CD14-positive monocyte (primary cell): ENCODE measurements at regions of chr3 and their contacts with region 1.

Region 1: GRCh38 chr3:130539005-130539404 is 22.0 kb downstream of the COL6A6 start:
- DNase-seq: no peak
- H3K4me3 ChIP-seq: no peak overlapping the region
- H3K4me3 Mint-ChIP-seq: no peak overlapping the region
- H3K27ac ChIP-seq: no peak overlapping the region
- H3K27ac Mint-ChIP-seq: peak overlapping the region in 1 of 7 donors; percentile 48
- H3K4me1 ChIP-seq: no peaks in the 10 kb centered on the region
- H3K4me1 Mint-ChIP-seq: no peaks in the 10 kb centered on the region
- H3K27me3 ChIP-seq: no peaks in the 10 kb centered on the region
- H3K27me3 Mint-ChIP-seq: peaks cover 0 to 8% (median 3%) of the 10 kb centered on the region in 3 donors
- CTCF ChIP-seq: peak; percentile 67

Region 2: GRCh38 chr3:130276203-130276803 is 262.7 kb before region 1 on chr3:
- intact Hi-C with region 1: loop called (anchors 5 to 10 kb)
- DNase-seq: peak in 2 of 3 donors; percentile 8 to 18
- H3K4me3 ChIP-seq: no peak overlapping the region
- H3K4me3 Mint-ChIP-seq: no peak overlapping the region
- H3K27ac ChIP-seq: no peak overlapping the region
- H3K27ac Mint-ChIP-seq: no peak overlapping the region
- H3K4me1 ChIP-seq: no peaks in the 10 kb centered on the region
- H3K4me1 Mint-ChIP-seq: no peaks in the 10 kb centered on the region
- H3K27me3 ChIP-seq: no peaks in the 10 kb centered on the region
- H3K27me3 Mint-ChIP-seq: peaks cover 0 to 9% (median 7%) of the 10 kb centered on the region in 3 donors
- CTCF ChIP-seq: peak; percentile 76

Region 3: DNA sequence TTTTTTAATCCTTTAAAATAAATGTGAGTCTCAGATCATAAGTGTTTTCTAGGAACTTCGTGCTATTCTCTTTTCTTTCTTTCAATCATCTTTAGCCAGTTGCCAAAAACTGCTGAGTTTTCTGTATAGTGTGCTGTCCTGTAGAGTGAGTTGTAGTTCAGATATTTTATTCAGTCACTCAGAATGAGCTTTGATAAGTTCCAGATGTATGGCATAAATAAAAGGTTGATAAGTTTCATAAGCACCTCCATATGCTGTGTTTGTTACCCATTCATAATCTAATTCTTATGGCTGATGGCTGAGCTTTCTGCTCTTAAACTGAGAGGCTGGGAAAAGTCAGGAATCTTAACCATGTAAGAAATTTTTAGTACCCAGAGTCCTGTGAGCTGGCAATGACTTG is 81.3 kb before region 1 on chr3:
- intact Hi-C with region 1: no loop called
- DNase-seq: no peak
- H3K4me3 ChIP-seq: no peak overlapping the region
- H3K4me3 Mint-ChIP-seq: no peak overlapping the region
- H3K27ac ChIP-seq: no peak overlapping the region
- H3K27ac Mint-ChIP-seq: no peak overlapping the region
- H3K4me1 ChIP-seq: no peaks in the 10 kb centered on the region
- H3K4me1 Mint-ChIP-seq: no peaks in the 10 kb centered on the region
- H3K27me3 ChIP-seq: no peaks in the 10 kb centered on the region
- H3K27me3 Mint-ChIP-seq: peaks cover 0 to 2% (median 0%) of the 10 kb centered on the region in 3 donors
- CTCF ChIP-seq: no peak

Region 4: DNA sequence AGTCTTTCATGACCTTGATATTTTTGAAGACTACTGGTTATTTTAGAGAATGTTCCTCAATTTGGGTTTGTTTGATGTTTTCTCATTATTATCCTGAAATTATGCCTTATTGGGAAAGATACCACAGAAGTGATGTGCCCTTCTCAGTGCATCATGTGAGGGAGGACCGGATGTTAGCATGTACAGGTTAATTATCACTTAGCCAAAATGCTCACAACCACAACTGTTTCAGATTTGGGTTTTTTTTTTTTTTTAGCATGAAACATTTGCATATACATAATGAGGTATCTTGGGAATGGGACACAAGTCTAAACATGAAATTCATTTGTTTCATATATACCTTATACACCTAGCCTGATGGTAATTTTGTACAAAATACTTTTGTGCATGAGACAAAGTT is 147.8 kb after region 1 on chr3:
- intact Hi-C with region 1: no loop called
- DNase-seq: no peak
- H3K4me3 ChIP-seq: no peak overlapping the region
- H3K4me3 Mint-ChIP-seq: no peak overlapping the region
- H3K27ac ChIP-seq: no peak overlapping the region
- H3K27ac Mint-ChIP-seq: no peak overlapping the region
- H3K4me1 ChIP-seq: no peaks in the 10 kb centered on the region
- H3K4me1 Mint-ChIP-seq: no peaks in the 10 kb centered on the region
- H3K27me3 ChIP-seq: no peaks in the 10 kb centered on the region
- H3K27me3 Mint-ChIP-seq: no peaks in the 10 kb centered on the region
- CTCF ChIP-seq: no peak